ENCODE measurements at regions of chr14 and their contacts with region 1.

Region 1: DNA sequence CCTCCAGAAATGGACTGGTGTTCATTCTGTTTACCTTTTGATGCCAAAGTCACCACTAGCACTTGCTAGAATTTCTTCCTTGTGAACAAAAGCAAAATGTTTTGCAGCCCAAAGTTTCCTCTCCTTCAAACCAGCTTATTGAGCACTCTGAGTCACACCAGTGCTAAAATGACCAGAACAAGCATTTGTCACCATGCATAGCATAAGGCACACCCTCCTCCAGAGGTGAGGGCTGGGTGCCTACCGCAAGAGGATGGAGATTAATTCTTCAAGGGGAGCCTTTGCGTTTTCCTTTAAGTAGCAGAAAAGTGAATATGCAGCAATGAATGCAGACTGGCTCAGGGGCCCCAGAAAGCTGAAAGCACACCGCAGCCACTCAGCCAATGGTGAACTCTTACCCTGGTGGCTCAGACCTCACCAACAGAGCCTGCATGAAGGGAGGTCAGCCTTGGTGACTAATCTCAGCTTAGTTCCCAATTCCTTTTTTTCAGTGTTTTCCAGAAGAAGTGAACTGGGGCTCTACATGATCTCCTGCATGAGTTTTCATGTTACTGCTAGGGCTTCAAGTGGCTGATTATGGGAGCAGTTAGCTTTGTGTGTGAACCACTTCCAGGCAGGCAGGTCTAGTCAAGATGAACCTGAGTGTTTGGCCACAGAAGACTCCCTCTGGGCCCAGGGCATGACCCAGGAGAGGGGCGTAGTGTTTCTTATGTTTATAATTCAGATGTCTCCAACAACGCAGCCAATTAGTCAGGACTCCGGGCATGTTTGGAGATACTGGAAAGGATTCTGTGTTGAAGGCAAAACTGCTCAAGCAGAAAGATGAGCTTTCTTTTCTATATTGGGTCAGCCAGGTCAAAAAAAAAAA is 96.3 kb downstream of the PAX9 start:
- DNase-seq: no peak
- ATAC-seq: no peak
- H3K4me3 ChIP-seq: no peak overlapping the region
- H3K27ac ChIP-seq: no peak overlapping the region
- H3K4me1 ChIP-seq: no peaks in the 10 kb centered on the region
- H3K27me3 ChIP-seq: no peaks in the 10 kb centered on the region

Region 2: GRCh38 chr14:36738269-36738668 is 19.7 kb before region 1 on chr14:
- intact Hi-C with region 1: loop called in 1 of 2 experiments (anchors 1 kb)
- DNase-seq: no peak
- ATAC-seq: no peak
- H3K4me3 ChIP-seq: no peak overlapping the region
- H3K27ac ChIP-seq: no peak overlapping the region
- H3K4me1 ChIP-seq: no peaks in the 10 kb centered on the region
- H3K27me3 ChIP-seq: no peaks in the 10 kb centered on the region

Measured in aorta (tissue), 5 donors.